Heart right ventricle (tissue), 16 donors: ENCODE measurements at regions of chr2 and their contacts with region 1.

Region 1: DNA sequence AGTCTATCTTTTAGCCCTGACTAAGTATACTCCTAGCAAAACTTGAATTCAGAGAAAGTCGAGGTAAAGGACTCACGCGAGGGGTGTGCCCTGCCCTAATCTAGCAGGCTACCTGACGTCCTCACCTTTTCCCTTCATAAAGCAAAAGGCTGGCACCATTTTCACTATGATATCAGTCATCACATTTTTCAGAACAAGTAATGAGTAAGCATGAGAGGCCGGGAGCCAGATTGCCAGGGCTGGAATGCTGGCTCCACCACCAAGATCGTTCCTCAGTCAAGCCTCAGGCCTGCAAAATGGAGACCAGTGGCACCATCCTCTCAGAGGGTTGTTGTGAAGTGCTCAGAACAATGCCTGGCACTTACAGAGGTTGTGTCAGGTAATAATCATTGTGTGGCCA is 18.7 kb upstream of the NCKAP5 start:
- DNase-seq: no peak
- ATAC-seq: peak in 5 of 8 donors; percentile 37 to 66 (median 59)
- H3K4me3 ChIP-seq: no peak overlapping the region
- H3K27ac ChIP-seq: peak overlapping the region in 4 of 10 donors; percentile 8 to 47 (median 28)
- H3K4me1 ChIP-seq: peaks cover 0 to 38% (median 8%) of the 10 kb centered on the region in 9 donors
- H3K27me3 ChIP-seq: no peaks in the 10 kb centered on the region
- CTCF ChIP-seq: no peak

Region 2: DNA sequence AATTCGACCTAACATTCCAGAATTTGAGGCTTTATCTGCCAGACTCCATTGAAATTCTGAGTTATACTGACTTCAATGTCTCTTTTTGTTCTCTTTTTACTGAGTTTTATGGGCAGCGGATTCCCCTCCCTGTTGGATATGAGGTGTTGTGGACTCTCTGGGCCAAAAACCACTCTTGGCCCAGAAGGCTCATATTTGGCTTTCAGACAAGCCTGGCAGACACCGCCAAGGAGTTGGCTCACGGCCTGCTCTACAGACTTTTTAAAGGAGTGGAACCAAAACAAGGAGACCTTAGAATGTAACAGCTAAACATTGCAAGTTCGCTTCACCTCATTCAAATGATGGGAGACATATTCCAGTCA is 187.7 kb after region 1 on chr2:
- intact Hi-C with region 1: loop called in 1 of 10 experiments (anchors 5 kb)
- DNase-seq: peak in 1 of 2 donors; percentile 32
- ATAC-seq: peak; percentile 19 to 58 (median 36)
- H3K4me3 ChIP-seq: no peak overlapping the region
- H3K27ac ChIP-seq: peak overlapping the region in 7 of 10 donors; percentile 45 to 75 (median 65)
- H3K4me1 ChIP-seq: peaks cover 0 to 40% (median 17%) of the 10 kb centered on the region in 9 donors
- H3K27me3 ChIP-seq: no peaks in the 10 kb centered on the region
- CTCF ChIP-seq: no peak